ENCODE measurements at regions of chr18 and their contacts with region 1.

Region 1: GRCh38 chr18:36095936-36096519 is 28.7 kb upstream of the RPRD1A start:
- DNase-seq: peak; percentile 10 to 69
- ATAC-seq: peak in 1 of 2 experiments; percentile 43; a peak in 1 of 6 replicates
- H3K4me3 ChIP-seq: no peak overlapping the region
- H3K27ac ChIP-seq: no peak overlapping the region
- H3K4me1 ChIP-seq: no peaks in the 10 kb centered on the region
- CTCF ChIP-seq: peak; percentile 66
- EP300 ChIP-seq: no peak
- POLR2A ChIP-seq: no peak
- RAD21 ChIP-seq: peak; percentile 74 to 75

Region 2: GRCh38 chr18:36017232-36017631 is 78.8 kb before region 1 on chr18:
- CTCF ChIA-PET with region 1: interaction called, 13 read pairs
- POLR2A ChIA-PET with region 1: no interaction called
- DNase-seq: no peak
- ATAC-seq: peak in 1 of 2 experiments; percentile 29; a peak in 1 of 6 replicates
- H3K4me3 ChIP-seq: no peak overlapping the region
- H3K27ac ChIP-seq: no peak overlapping the region
- H3K4me1 ChIP-seq: no peaks in the 10 kb centered on the region
- CTCF ChIP-seq: no peak
- EP300 ChIP-seq: no peak
- POLR2A ChIP-seq: no peak
- RAD21 ChIP-seq: no peak

Measured in A549 (cell line).